Gastrocnemius medialis (tissue), 4 donors: ENCODE measurements at regions of chr1 and their contacts with region 1.

Region 1: DNA sequence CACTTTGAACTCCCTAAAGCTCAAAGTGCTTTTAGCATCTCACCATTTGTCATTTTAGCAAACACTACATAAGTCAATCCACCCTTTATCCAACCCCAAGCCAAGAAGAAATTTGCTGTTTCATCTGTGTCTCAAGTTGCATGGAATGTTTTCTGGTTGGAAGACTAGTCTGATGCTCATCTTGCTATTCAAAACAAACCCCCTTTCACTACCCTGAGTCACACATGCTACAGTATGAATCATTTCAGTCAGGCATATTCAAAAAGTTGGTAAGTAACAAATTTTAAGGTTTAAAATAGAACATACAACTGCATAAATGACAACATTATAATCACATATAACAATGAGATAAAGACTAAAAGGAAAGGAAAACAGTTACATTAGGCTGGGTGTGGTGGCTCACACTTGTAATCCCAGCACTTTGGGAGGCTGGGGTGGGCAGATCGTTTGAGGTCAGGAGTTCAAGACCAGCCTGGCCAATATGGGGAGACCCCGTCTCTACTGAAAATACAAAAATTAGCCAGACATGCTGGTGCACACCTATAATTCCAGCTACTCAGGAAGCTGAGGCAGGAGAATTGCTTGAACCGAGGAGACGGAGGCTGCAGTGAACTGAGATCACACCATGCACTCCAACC is 38.7 kb downstream of the DSTYK start:
- DNase-seq: peak in 1 of 2 donors; percentile 24
- ATAC-seq: peak; percentile 84
- H3K4me3 ChIP-seq: no peak overlapping the region
- H3K27ac ChIP-seq: peak overlapping the region; percentile 67 to 92 (median 76)
- H3K4me1 ChIP-seq: peaks cover 32 to 64% of the 10 kb centered on the region in 2 donors
- H3K27me3 ChIP-seq: no peaks in the 10 kb centered on the region
- CTCF ChIP-seq: no peak
- POLR2A ChIP-seq: no peak

Region 2: GRCh38 chr1:203290261-203291089 is 1882.4 kb before region 1 on chr1:
- in situ Hi-C with region 1: no loop called
- intact Hi-C with region 1: no loop called
- DNase-seq: peak; percentile 87 to 91
- ATAC-seq: peak; percentile 73
- H3K4me3 ChIP-seq: peak overlapping the region; percentile 29 to 48 (median 42)
- H3K27ac ChIP-seq: peak overlapping the region; percentile 91 to 96 (median 94)
- H3K4me1 ChIP-seq: peaks cover 46 to 60% of the 10 kb centered on the region in 2 donors
- H3K27me3 ChIP-seq: no peaks in the 10 kb centered on the region
- CTCF ChIP-seq: no peak
- POLR2A ChIP-seq: peak; percentile 80 to 89

Region 3: GRCh38 chr1:205211169-205211838 is 38.5 kb after region 1 on chr1 and contains the start of gene DSTYK:
- in situ Hi-C with region 1: no loop called
- intact Hi-C with region 1: loop called (anchors 2 kb)
- DNase-seq: peak; percentile 91 to 92
- ATAC-seq: peak; percentile 96
- H3K4me3 ChIP-seq: peak within 1 kb of the TSS; percentile 67 to 98 (median 91)
- H3K27ac ChIP-seq: peak within 1 kb of the TSS; percentile 87 to 96 (median 92)
- H3K4me1 ChIP-seq: peaks cover 17 to 29% of the 10 kb centered on the region in 2 donors
- H3K27me3 ChIP-seq: no peaks in the 10 kb centered on the region
- CTCF ChIP-seq: no peak
- POLR2A ChIP-seq: peak; percentile 78 to 83
- total RNA-seq, gene DSTYK: 12.2 to 15.8 (median 13.9) TPM